Left colon (tissue), 2 donors: ENCODE measurements at regions of chr17 and their contacts with region 1.

Region 1: DNA sequence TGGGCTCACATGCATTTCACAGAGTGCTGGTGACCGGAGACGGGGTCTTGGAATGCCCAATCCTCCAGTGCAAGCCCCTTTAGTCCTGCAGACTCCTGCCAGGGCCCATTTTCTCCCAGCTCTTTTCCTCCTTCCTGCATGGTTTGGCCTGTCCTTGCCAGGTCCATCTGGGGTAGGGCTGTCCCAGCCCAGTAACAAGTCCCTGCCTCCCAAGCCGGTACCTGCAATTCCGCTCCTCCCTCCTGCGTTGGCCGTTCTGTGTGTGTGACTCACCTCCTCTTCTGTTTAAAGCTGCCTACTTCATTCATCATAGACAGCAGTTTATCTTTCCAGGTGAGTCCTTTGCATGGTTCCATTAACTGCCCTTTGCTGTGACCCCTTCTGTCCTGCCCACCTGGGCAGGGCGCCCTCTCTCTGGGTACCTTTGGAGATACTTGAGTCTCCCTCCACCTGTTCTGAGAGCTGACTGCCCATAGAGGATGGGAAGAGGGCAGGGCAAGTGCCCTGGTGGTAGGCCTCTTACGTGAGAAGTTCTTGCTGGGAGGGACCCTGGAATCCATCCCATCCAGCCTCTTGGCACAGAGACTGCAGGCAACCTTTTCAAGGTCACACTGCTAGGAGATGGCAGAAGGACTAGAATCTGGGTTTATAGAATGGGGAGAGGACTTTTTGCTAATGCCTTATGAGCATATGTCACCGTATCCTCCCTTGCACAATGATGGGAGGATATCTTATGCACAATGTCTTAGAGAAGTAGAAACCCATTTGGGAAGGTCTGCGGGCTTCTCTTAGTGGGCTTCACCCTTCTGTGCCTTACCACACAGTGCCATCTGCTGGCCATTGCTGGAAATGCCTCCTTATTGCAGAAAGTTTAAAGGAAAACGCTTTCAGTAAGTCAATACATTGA is 29.7 kb upstream of the LGALS9 start:
- DNase-seq: peak; percentile 55 to 90
- ATAC-seq: peak; percentile 57

Region 2: DNA sequence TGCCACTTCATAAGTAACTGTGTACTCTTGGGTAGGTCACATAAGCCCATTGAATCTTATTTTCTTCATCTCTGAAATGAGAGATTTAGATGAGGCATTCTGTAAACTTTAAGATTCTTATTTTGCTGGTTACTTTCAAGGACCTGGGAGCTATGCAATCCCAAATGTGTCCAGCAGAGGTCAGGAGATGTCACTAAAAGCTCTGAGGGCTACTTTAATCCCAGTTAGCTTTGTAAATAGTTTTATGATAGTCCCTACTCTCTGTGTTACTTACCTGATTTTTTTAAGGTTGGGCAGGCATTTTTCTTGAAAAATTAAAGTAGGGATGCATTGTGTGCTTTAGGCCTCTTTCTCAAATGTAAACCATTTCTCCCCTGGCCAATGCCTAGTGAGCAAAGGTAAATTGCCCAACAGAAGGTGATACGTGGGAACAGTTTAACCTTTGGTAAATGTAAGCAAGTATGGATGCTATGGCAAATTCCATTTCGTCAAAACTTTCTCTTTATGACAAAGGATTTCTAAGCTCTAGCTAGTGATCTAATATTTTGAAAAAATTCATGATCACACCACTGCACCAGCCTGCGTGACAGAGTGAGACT is 364.5 kb before region 1 on chr17:
- intact Hi-C with region 1: loop called (anchors 5 to 10 kb)
- DNase-seq: peak; percentile 68 to 90
- ATAC-seq: peak; percentile 88

Region 3: GRCh38 chr17:27356091-27356705 is 245.1 kb before region 1 on chr17:
- intact Hi-C with region 1: loop called in 1 of 2 experiments (anchors 5 kb)
- DNase-seq: no peak
- ATAC-seq: no peak

Region 4: DNA sequence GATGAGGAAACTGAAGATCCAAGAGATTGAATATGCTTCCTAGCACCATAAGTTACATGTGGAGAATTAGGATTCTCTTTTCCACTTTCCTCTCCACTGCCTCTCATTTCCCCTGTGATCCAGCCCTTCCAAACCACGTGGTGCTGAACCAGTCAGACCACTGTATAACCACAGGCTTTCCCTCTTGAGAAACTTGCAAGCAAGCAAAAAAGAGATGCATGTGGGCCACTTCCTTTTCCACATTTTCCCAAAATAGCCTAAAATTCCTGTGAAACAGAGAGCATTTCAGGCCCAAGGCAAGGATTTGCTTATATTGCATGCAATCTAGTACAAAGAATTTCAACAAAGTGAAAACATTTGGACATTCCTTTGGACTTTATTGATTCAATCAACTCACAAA is 204.4 kb before region 1 on chr17:
- intact Hi-C with region 1: no loop called
- DNase-seq: no peak
- ATAC-seq: no peak

Region 5: DNA sequence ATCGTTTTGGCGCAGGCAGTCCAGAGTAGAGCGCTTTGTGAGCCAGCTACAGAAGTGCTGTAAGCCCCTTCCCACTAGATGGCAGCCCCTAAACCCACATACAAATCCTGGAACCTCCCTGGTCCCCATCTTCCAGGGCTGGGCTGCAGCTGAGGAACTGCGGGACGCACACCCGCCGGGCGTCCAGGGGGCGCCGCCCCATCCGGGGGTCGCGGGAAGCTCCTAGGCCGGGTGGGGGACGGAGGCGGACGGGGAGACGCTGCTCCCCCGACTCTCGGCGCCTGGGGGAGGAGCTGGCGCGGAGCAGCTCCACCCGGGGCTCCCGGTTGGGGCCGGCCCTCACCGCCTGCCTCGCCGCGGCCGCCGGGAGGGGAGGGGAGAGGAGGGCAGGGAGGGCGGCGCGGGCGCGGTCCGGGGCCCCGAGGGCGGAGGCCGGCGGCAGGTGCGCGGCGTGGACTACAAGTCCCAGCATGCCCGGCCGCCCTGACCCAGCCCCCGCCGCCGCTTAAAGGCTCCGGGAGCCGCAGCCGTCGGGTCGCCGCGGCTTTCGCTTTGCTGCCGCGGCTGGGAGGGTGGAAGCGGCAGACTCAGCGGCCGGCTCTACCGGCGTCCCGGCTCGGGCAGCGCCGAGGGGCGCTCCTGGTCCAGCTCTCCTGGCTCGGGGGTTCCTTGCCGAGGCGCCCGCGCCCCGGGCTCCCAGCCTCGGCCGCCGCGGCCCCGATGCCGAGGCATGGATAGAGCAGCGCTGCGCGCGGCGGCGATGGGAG is 145.2 kb before region 1 on chr17 and contains the start of gene KSR1:
- intact Hi-C with region 1: loop called in 1 of 2 experiments (anchors 10 kb)
- DNase-seq: peak; percentile 80 to 89
- ATAC-seq: peak; percentile 98
- total RNA-seq, gene KSR1: 19.0 to 29.1 TPM

Region 6: GRCh38 chr17:27805520-27806146 is 204.3 kb after region 1 on chr17:
- intact Hi-C with region 1: no loop called
- DNase-seq: peak; percentile 85
- ATAC-seq: peak; percentile 69